T-cell (primary cell): ENCODE measurements at regions of chr2 and their contacts with region 1.

Region 1: GRCh38 chr2:74482801-74483674 is at the starts of genes CCDC142 and TTC31:
- DNase-seq: peak; percentile 87 to 95 (median 93)
- ATAC-seq: peak; percentile 90 to 94 (median 91)
- H3K4me3 ChIP-seq: peak within 1 kb of the TSS; percentile 95 to 98
- H3K4me3 Mint-ChIP-seq: peak within 1 kb of the TSS; percentile 91 to 100 (median 99)
- H3K27ac ChIP-seq: peak within 1 kb of the TSS; percentile 67
- H3K27ac Mint-ChIP-seq: peak within 1 kb of the TSS; percentile 99 to 100
- H3K4me1 ChIP-seq: peaks cover 13 to 30% of the 10 kb centered on the region in 2 experiments
- H3K4me1 Mint-ChIP-seq: peaks cover 25 to 44% (median 34%) of the 10 kb centered on the region in 3 donors
- H3K27me3 ChIP-seq: no peaks in the 10 kb centered on the region
- H3K27me3 Mint-ChIP-seq: no peaks in the 10 kb centered on the region
- total RNA-seq, gene CCDC142: 16.1 to 59.3 (median 56.7) TPM
- total RNA-seq, gene TTC31: 33.1 to 45.8 (median 44.6) TPM

Region 2: GRCh38 chr2:74226648-74227213 is 256.3 kb before region 1 on chr2:
- CTCF ChIA-PET with region 1: no interaction called
- POLR2A ChIA-PET with region 1: no interaction called
- DNase-seq: no peak
- ATAC-seq: no peak
- H3K4me3 ChIP-seq: no peak overlapping the region
- H3K4me3 Mint-ChIP-seq: no peak overlapping the region
- H3K27ac ChIP-seq: no peak overlapping the region
- H3K27ac Mint-ChIP-seq: no peak overlapping the region
- H3K4me1 ChIP-seq: no peaks in the 10 kb centered on the region
- H3K4me1 Mint-ChIP-seq: no peaks in the 10 kb centered on the region
- H3K27me3 ChIP-seq: peaks cover 0 to 8% of the 10 kb centered on the region in 2 experiments
- H3K27me3 Mint-ChIP-seq: no peaks in the 10 kb centered on the region

Region 3: DNA sequence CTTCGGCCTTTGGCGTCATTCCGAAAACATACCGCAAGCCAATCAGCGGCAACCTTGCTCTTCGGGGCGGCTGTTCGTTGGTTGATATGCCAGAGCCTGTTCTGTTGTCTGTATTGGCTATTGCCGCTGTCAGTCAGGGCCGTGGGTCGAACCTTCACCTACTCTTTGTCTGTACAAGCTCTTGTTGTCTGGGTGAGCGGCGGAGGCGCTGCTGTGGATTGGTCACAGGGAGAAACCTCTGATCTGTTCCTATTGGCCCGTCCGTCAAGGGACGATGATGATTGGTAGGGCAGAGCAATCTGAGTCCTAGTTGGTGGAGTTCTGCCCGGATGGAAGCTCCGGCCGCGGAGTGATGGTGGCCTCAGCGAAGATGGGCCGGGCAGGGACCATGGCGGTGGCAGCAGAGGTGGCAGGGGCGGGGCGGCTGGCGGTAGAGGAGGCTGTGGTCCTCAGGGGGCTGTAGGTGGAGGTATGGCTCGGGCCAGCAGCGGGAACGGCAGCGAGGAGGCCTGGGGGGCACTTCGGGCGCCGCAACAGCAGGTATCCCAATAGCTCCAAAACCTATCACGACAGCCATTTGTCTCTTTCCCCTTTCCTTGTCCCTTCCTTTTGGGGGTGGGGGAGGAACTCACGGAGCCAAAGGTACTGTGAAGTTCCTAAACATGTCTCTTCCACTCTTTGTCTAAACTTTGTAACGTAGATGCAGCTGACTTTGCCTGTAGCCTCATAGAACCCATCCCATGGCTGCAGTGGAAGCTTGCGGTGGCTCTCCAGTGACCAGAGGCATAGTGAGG is 24.7 kb before region 1 on chr2 and contains the start of gene WBP1:
- CTCF ChIA-PET with region 1: interaction called in 1 of 2 experiments, 24 read pairs
- POLR2A ChIA-PET with region 1: interaction called in 1 of 2 experiments, 4 read pairs
- DNase-seq: peak; percentile 96 to 100 (median 100)
- ATAC-seq: peak; percentile 82 to 84 (median 82)
- H3K4me3 ChIP-seq: peak within 1 kb of the TSS; percentile 93 to 96
- H3K4me3 Mint-ChIP-seq: peak within 1 kb of the TSS; percentile 93 to 99 (median 97)
- H3K27ac ChIP-seq: peak within 1 kb of the TSS; percentile 99
- H3K27ac Mint-ChIP-seq: peak within 1 kb of the TSS; percentile 99
- H3K4me1 ChIP-seq: peaks cover 32 to 44% of the 10 kb centered on the region in 2 experiments
- H3K4me1 Mint-ChIP-seq: peaks cover 59 to 71% (median 64%) of the 10 kb centered on the region in 3 donors
- H3K27me3 ChIP-seq: no peaks in the 10 kb centered on the region
- H3K27me3 Mint-ChIP-seq: no peaks in the 10 kb centered on the region
- total RNA-seq, gene WBP1: 80.2 to 104 (median 98.2) TPM

Region 4: DNA sequence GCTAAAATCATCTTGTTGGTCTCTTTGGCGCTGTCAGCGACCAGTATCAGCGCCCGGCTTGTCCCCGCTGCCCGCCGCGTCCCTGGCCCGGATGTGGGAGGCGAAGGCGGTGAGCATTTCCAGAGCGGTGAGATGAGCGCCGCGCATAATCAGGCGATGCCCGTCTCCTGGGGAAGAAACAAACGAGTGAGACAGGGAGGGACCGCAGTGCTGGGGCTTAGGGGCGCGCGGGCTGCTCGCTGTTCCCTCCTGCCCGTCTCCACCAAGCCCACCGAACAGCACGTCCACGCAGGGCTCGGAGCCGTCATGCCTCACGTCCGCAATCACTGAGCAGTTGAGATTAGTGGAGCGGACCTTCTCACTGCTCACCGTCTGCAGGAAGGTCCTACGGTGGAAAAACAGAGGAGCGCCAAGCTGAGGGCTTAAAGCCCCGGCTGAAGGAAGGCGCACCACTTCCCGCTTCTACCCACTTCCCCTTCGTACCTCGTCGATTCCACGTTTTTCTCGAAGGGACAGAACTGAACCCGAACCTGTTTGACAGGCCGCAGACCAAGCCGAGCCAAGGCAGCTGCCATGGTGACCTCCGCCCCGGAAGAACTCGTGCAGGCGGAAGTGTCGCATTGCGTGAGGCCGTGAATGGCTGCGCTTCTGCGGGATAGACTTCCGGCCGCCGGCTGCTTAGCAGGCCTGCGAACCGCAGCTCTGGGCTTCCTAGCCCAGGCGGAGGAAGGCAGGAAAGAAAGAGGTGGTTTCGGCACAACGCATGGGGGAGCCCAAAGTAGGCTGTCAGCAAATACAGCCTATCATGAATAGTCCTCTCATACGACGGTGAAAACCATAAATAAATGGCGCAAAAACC is 10.7 kb before region 1 on chr2 and contains the start of gene MRPL53:
- CTCF ChIA-PET with region 1: interaction called in 1 of 2 experiments, 17 read pairs
- POLR2A ChIA-PET with region 1: interaction called, 4 to 6 read pairs
- DNase-seq: peak; percentile 90 to 99 (median 95)
- ATAC-seq: peak; percentile 93 to 96 (median 94)
- H3K4me3 ChIP-seq: peak within 1 kb of the TSS; percentile 66 to 73
- H3K4me3 Mint-ChIP-seq: peak within 1 kb of the TSS; percentile 90 to 96 (median 96)
- H3K27ac ChIP-seq: peak within 1 kb of the TSS; percentile 88
- H3K27ac Mint-ChIP-seq: peak within 1 kb of the TSS; percentile 95 to 99
- H3K4me1 ChIP-seq: peaks cover 13 to 27% of the 10 kb centered on the region in 2 experiments
- H3K4me1 Mint-ChIP-seq: peaks cover 21 to 30% (median 24%) of the 10 kb centered on the region in 3 donors
- H3K27me3 ChIP-seq: no peaks in the 10 kb centered on the region
- H3K27me3 Mint-ChIP-seq: no peaks in the 10 kb centered on the region
- total RNA-seq, gene MRPL53: 53.9 to 77.9 (median 59.4) TPM

Region 5: GRCh38 chr2:74529357-74530238 is 46.6 kb after region 1 on chr2 and contains the starts of genes AUP1 and HTRA2:
- CTCF ChIA-PET with region 1: interaction called, 5 to 35 read pairs
- POLR2A ChIA-PET with region 1: interaction called, 3 to 4 read pairs
- DNase-seq: peak; percentile 71 to 90 (median 80)
- ATAC-seq: peak; percentile 91 to 93 (median 92)
- H3K4me3 ChIP-seq: peak within 1 kb of the TSS; percentile 70 to 93
- H3K4me3 Mint-ChIP-seq: peak within 1 kb of the TSS; percentile 90 to 95 (median 95)
- H3K27ac ChIP-seq: peak within 1 kb of the TSS; percentile 72
- H3K27ac Mint-ChIP-seq: peak within 1 kb of the TSS; percentile 94
- H3K4me1 ChIP-seq: peaks cover 15 to 37% of the 10 kb centered on the region in 2 experiments
- H3K4me1 Mint-ChIP-seq: peaks cover 37 to 47% (median 46%) of the 10 kb centered on the region in 3 donors
- H3K27me3 ChIP-seq: no peaks in the 10 kb centered on the region
- H3K27me3 Mint-ChIP-seq: no peaks in the 10 kb centered on the region
- total RNA-seq, gene AUP1: 144 to 167 (median 149) TPM
- total RNA-seq, gene HTRA2: 25.1 to 45.2 (median 38.3) TPM

Region 6: GRCh38 chr2:74587664-74588277 is 104.7 kb after region 1 on chr2:
- CTCF ChIA-PET with region 1: interaction called, 10 to 14 read pairs
- POLR2A ChIA-PET with region 1: interaction called in 1 of 2 experiments, 4 read pairs
- DNase-seq: peak; percentile 16 to 79 (median 47)
- ATAC-seq: peak; percentile 81 to 90 (median 82)
- H3K4me3 ChIP-seq: no peak overlapping the region
- H3K4me3 Mint-ChIP-seq: no peak overlapping the region
- H3K27ac ChIP-seq: no peak overlapping the region
- H3K27ac Mint-ChIP-seq: no peak overlapping the region
- H3K4me1 ChIP-seq: peaks cover 0 to 4% of the 10 kb centered on the region in 2 experiments
- H3K4me1 Mint-ChIP-seq: peaks cover 8 to 15% (median 12%) of the 10 kb centered on the region in 3 donors
- H3K27me3 ChIP-seq: peaks cover 0 to 6% of the 10 kb centered on the region in 2 experiments
- H3K27me3 Mint-ChIP-seq: peaks cover 11 to 16% of the 10 kb centered on the region in 2 donors

Region 7: DNA sequence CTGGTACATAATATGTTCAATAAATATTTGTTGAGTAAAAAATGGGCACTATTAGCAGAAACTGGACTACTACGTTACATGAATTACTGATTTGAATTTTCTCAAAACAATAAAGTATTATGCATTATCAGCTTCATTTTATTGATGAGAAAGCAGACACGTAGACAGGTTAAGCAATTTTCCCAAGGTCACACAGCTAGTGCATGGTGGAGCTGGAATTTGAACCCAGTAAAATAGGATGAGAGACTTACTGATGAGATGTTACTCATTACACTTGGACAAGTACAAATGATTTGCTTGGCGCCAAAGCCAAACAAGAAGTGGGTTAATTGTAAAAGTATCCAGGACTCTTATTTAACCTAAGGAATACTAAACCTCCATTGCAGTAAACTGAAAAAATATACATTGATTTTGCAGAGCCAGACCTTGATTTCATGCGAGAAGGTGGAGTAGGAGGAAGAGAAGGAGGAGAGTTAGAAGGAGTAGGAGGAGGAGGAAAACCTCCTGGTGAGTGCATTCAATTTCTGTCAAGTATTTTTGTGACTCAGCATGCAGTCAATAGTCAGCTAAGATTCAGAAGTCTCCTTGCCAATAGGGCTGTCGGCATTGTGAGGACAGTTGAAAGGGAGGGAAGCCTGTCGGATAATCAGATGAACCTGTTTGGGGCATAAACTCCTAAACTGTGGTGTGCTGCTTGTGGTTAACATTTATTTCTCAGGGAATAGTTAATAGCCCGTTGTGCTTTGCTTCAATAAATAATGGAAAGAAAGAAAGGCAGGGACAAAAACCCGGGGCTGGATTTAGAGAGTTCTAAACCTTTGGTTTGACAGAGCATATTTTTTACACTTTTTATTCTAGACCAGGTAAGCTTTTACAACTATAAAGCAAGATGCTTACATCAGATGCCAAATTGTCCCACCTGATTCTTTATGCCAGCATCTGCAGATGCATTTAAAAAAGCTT is 793.3 kb after region 1 on chr2:
- CTCF ChIA-PET with region 1: no interaction called
- POLR2A ChIA-PET with region 1: no interaction called
- DNase-seq: no peak
- ATAC-seq: no peak
- H3K4me3 ChIP-seq: no peak overlapping the region
- H3K4me3 Mint-ChIP-seq: no peak overlapping the region
- H3K27ac ChIP-seq: no peak overlapping the region
- H3K27ac Mint-ChIP-seq: no peak overlapping the region
- H3K4me1 ChIP-seq: no peaks in the 10 kb centered on the region
- H3K4me1 Mint-ChIP-seq: no peaks in the 10 kb centered on the region
- H3K27me3 ChIP-seq: no peaks in the 10 kb centered on the region
- H3K27me3 Mint-ChIP-seq: peaks cover 0 to 12% of the 10 kb centered on the region in 2 donors